Motor neuron (in vitro differentiated cells): ENCODE measurements at regions of chr5 and their contacts with region 1.

Region 1: DNA sequence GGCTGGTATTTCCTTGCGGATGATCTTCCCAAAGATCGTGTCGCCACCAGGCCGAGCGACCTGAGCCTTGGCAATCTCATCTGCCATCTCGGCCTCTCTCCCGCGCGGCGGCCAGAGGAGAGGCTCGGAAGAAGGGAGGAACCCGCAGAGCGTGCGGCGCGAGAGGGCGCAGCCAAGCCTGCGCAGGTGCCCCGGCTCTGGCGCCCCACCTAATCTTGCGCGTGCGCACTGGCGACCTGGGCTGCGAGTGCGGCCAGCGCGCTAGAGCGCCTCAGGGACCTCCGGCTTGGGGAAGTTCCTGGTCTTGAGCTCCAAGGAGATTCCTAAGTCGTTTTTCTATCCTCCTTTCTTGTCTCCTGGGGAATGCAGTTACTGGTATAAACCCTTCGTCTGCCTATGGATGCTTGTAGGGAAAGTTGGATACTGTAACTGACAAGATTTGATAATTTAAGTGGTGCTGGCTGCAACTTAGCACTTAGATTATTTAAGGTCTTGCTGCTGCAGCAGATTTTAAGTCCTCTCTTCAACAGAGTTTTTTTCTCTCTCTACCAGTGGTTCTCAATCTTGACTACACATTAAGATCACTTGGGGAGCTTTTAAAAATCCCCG is at the start of gene HINT1:
- ATAC-seq: peak; percentile 76 to 94 (median 90)
- H3K4me3 ChIP-seq: peak within 1 kb of the TSS; percentile 55 to 75 (median 71)
- H3K27ac ChIP-seq: peak within 1 kb of the TSS; percentile 77
- H3K4me1 ChIP-seq: peaks cover 4 to 19% of the 10 kb centered on the region in 2 donors
- total RNA-seq, gene HINT1: 179 to 491 (median 265) TPM

Region 2: DNA sequence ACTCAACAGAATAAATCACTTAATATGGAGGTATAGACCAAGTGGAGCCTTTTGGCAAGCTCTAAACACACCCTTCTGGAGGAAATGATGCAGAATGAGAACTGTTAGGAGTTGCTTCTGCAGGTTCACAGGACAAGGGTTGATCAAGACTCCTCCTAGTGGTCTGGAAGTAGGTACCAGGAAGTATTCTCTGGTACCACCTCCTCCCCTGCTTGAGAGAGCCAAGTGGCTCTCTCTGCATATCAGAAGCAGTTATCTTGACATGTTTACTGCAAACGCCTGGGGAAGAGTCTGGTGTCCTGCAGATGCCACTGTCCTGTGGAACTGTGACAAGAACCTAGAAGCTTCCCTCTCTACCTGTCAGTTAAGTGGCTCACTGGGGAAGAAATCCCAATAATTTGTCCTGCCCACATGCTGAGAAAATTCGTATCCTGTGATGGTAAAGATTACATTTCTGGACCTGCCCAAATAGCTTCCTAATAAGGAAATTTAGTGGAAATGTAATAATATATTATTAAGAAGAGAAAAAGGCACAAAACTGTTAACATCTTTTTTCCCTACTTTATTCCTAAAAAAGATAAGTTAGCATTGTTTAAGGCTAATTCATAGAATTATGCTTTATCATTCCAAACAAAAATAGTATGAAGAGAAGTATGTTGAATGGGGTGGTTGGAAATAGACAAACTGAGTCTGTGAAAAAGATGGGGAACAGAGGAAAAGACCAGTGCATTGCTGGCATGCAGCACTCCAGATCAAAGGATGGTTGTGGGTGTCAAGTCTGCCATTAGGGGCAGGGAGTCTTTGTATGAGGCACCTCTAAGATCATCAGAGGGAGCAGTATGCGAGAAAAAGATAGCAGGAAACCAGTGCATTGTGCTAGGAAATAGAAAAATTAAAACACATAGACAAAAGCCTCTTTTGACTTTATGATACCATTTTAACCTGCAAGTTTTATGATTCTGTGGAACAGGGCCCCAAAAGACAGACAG is 217.5 kb after region 1 on chr5:
- in situ Hi-C with region 1: loop called in 2 of 9 experiments (anchors 25 kb)
- ATAC-seq: peak in 6 of 8 experiments; percentile 31 to 91 (median 80)
- H3K4me3 ChIP-seq: no peak overlapping the region
- H3K27ac ChIP-seq: no peak overlapping the region
- H3K4me1 ChIP-seq: peaks cover 0 to 4% of the 10 kb centered on the region in 2 donors

Region 3: DNA sequence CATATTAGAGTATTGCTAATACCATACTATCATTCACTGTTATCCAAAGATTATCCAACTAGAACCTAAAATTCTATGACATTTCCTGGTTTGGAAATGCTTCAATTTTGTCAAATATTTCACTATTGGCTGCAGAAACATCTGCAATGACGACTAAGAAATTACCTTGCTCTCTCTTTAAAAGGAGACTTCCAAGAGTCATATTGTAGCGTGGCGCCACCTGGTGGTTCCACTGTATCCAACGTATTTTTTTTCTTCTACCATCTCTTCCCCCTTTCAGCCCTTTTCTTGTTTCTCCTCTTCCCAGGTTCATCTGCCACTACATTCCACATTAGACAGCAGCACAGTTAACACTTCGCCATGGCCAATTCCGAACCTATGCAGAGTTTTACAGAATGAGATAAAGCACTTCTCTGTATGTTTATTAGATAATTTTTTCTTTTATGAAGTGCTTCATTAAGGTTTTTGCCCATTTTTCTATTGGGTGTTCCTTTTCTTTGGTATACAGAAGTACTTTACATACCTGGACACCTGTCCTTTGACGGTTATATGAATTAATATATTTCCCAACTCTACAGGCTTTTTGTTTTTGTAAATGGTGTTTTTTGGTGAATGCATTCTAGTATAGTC is 252.1 kb after region 1 on chr5:
- in situ Hi-C with region 1: loop called in 4 of 9 experiments (anchors 10 to 25 kb)
- ATAC-seq: peak in 6 of 8 experiments; percentile 36 to 74 (median 58)
- H3K4me3 ChIP-seq: no peak overlapping the region
- H3K27ac ChIP-seq: no peak overlapping the region
- H3K4me1 ChIP-seq: no peaks in the 10 kb centered on the region

Region 4: DNA sequence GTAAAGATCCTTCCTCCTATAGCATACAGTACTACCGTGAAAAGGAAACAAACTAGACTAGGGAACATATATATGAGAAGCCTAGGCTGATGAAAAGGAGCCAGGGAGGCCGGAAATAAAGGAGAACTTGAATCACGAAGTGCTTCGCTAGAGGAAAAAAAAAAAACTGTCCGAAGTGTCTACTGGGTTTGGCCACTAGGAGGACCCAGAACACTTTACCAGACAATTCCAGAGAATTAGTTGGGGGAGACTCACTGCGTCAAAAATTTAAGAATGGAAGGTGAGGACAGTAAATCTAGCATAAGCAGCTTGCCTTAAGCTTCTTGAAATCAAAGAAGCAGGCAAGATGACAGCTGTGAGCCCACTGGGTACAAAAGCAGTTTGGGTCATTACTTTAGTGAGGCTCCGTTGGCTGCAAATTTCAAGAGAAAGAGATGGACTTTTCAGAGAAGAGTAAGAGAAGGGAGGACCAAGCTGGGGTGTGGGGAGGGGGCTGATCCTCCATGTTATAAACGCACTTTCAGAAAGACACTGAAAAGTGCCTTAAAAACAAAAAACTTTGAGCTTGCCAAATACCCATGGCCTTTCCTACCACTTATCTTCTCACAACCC is 1015.0 kb after region 1 on chr5:
- in situ Hi-C with region 1: no loop called
- ATAC-seq: peak in 5 of 8 experiments; percentile 11 to 69 (median 58)
- H3K4me3 ChIP-seq: no peak overlapping the region
- H3K27ac ChIP-seq: no peak overlapping the region
- H3K4me1 ChIP-seq: peaks cover 0 to 14% of the 10 kb centered on the region in 2 donors